PC-9 (cell line): ENCODE measurements at regions of chr4 and their contacts with region 1.

Region 1: DNA sequence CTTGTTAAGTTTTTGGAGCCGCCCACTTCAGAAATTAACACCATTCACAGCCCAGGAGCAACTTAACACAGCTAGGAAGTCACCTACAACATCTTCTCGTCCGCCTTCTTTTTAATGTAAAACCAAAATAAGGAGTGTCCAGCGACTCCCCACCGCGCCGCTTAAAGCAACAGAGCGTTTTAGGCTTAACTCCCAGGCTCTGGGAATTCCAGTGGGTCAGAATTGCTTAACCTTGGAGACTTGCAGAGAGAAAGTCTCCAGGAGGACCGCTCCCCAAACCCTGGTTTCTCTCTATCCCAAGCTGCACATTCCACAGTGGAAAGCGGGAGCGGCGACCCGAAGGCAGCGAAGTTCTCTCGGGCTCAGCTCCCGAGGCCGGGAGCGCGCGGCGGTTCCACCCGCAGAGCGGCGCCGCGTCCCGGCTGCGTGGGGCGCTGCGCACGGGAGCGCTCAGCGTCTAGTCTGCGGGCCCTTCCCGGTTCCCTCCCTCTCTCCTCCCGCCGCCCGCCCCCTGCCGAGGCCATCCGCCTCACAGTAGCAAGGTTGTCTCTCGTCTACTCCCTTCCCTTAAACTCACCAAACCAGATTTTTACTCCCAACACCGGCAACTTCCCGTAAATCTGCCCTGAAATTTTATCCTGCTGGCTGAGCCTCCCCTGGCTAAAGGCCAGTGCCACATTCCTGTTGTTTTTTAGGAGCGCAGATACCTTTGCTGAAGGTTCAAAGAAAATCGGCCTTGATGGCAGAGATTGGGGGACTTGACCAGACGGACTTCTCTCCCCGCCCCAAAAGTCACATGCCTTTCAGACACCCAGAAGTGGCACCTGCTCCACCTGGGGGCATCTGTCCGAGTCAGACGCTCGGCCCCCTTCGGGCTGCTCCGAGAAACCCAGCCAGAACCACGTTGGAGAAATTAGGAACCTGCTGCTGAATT is at the start of gene RBM47:
- DNase-seq: peak; percentile 89 to 94
- H3K4me3 ChIP-seq: peak within 1 kb of the TSS; percentile 96
- H3K27ac ChIP-seq: peak within 1 kb of the TSS; percentile 99
- H3K4me1 ChIP-seq: peaks cover 44% of the 10 kb centered on the region
- H3K27me3 ChIP-seq: no peaks in the 10 kb centered on the region
- CTCF ChIP-seq: no peak; the same call in 1 of the 2 replicates
- total RNA-seq, gene RBM47: 78.0 and 79.0 TPM in 2 replicates

Region 2: DNA sequence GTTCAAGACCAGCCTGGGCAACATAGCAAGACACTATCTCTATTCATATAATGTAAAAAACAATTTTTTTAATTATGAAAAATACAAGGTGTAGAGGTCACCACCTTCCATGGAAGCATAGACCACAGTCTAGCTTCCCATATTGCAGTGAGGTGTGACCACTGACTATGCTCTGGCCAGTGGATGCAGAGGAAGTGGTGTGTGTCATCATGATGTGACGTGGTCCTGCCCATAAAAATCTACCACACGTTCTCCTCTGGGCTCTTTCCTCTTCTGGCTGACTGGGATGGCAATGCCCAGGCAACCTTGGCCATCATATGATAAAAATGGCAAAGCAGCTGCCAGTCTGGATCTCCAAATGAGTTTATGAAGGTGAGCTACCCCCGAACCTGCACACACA is 65.7 kb before region 1 on chr4:
- CTCF ChIA-PET with region 1: no interaction called
- POLR2A ChIA-PET with region 1: no interaction called
- intact Hi-C with region 1: loop called (anchors 1 kb)
- DNase-seq: peak; percentile 22 to 52
- H3K4me3 ChIP-seq: peak overlapping the region; percentile 40; the same call in 1 of the 2 replicates
- H3K27ac ChIP-seq: peak overlapping the region; percentile 98
- H3K4me1 ChIP-seq: peaks cover 88% of the 10 kb centered on the region
- H3K27me3 ChIP-seq: no peaks in the 10 kb centered on the region
- CTCF ChIP-seq: no peak

Region 3: DNA sequence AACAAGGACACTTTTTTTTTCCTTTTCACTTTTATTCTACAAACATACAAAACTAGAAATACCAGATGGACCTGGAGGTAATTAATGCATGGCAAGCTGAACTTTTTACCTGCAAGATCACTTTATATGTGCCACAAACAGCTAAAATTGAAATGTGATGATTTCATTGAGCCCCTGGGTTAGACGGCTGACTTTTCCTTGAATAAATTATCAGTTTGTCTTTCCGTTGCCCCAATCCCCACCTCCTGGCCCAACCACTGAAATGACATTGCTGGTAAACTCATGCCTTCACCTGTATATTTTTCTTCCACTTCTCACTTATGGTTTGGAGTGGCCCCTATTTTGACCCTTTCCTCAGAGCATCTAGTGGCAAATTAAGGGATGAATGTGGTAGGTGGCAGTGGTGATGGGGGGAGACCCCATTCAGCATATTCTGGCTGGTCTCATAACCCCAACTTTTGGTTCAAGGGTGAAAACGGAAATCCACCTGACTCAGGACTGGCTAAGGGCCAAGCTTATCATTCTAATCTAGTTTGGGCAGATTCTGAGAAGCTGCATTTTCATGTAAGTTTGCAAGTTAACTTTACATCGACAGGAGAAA is 73.0 kb after region 1 on chr4:
- CTCF ChIA-PET with region 1: no interaction called
- POLR2A ChIA-PET with region 1: interaction called, 15 read pairs
- intact Hi-C with region 1: loop called (anchors 1 kb)
- DNase-seq: peak; percentile 51 to 87
- H3K4me3 ChIP-seq: peak overlapping the region; percentile 27; the same call in 1 of the 2 replicates
- H3K27ac ChIP-seq: peak overlapping the region; percentile 94
- H3K4me1 ChIP-seq: peaks cover 67% of the 10 kb centered on the region
- H3K27me3 ChIP-seq: no peaks in the 10 kb centered on the region
- CTCF ChIP-seq: no peak

Region 4: GRCh38 chr4:40710502-40711254 is 81.0 kb after region 1 on chr4:
- CTCF ChIA-PET with region 1: no interaction called
- POLR2A ChIA-PET with region 1: interaction called, 15 read pairs
- intact Hi-C with region 1: no loop called
- DNase-seq: peak in 1 of 2 experiments; percentile 69
- H3K4me3 ChIP-seq: no peak overlapping the region
- H3K27ac ChIP-seq: peak overlapping the region; percentile 64
- H3K4me1 ChIP-seq: peaks cover 21% of the 10 kb centered on the region
- H3K27me3 ChIP-seq: no peaks in the 10 kb centered on the region
- CTCF ChIP-seq: no peak